ENCODE measurements at regions of chr17 and their contacts with region 1.

Region 1: GRCh38 chr17:47949136-47949759 is 7.9 kb downstream of the PNPO start:
- DNase-seq: no peak
- H3K4me3 ChIP-seq: peak overlapping the region; percentile 12; the same call in 1 of the 2 replicates
- H3K27me3 ChIP-seq: no peaks in the 10 kb centered on the region
- CTCF ChIP-seq: peak; percentile 95

Region 2: DNA sequence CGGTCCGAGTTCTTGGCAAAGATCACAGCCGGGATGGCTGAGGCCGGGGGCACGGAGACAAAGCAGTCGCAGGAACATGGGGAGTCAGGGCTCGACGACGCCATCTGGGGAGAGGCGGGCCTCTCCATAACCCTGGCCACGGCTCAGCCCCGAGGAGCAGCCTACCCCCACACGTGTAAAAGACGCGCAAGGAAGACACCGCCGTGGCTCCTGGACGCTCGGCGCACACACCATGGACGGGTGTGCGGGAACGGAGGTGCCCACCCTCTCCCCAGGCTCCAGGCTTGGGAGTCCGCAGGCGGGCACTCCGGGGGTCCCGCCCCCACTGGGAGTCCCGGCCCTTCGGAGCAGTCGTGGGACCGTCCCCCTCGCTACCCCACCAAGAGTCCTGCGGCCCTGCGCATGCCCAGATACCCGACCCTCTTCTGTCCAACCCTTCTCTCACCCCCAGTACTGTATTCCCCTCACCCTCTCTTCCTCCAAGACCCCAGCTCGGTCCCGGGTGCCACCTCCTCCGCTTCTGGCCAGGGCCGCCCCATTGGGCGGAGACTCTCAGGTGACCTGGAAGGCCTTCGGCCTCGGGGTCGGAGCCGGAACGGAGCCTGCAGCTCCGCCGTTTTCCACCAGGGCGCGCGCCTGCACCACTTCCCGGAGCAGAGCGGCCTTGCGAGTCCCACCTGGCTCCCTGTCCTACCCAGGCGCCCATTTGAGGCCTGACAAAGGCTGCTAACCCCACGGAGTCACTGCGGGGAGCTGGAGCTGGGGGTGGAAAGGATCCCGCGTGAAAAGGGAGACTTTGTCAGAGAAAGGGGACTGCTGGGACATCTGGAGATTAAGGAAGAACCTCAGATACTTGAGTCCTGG is 108.3 kb before region 1 on chr17 and contains the start of gene SCRN2:
- CTCF ChIA-PET with region 1: interaction called, 18 read pairs
- POLR2A ChIA-PET with region 1: no interaction called
- DNase-seq: no peak
- H3K4me3 ChIP-seq: peak within 1 kb of the TSS; percentile 63
- H3K27me3 ChIP-seq: peaks cover 2% of the 10 kb centered on the region
- CTCF ChIP-seq: peak; percentile 98
- polyA plus RNA-seq, gene SCRN2: 18.3 and 41.1 TPM in 2 replicates

Region 3: GRCh38 chr17:47889734-47890529 is 59.3 kb before region 1 on chr17:
- CTCF ChIA-PET with region 1: interaction called, 17 read pairs
- POLR2A ChIA-PET with region 1: no interaction called
- DNase-seq: no peak
- H3K4me3 ChIP-seq: no peak overlapping the region
- H3K27me3 ChIP-seq: no peaks in the 10 kb centered on the region
- CTCF ChIP-seq: peak; percentile 94

Region 4: GRCh38 chr17:47905221-47905781 is 43.9 kb before region 1 on chr17:
- CTCF ChIA-PET with region 1: interaction called, 45 read pairs
- POLR2A ChIA-PET with region 1: no interaction called
- DNase-seq: peak; percentile 60
- H3K4me3 ChIP-seq: no peak overlapping the region
- H3K27me3 ChIP-seq: no peaks in the 10 kb centered on the region
- CTCF ChIP-seq: no peak

Region 5: GRCh38 chr17:47929218-47930000 is 19.8 kb before region 1 on chr17:
- CTCF ChIA-PET with region 1: interaction called, 16 read pairs
- POLR2A ChIA-PET with region 1: no interaction called
- DNase-seq: no peak
- H3K4me3 ChIP-seq: no peak overlapping the region
- H3K27me3 ChIP-seq: no peaks in the 10 kb centered on the region
- CTCF ChIP-seq: no peak

Region 6: DNA sequence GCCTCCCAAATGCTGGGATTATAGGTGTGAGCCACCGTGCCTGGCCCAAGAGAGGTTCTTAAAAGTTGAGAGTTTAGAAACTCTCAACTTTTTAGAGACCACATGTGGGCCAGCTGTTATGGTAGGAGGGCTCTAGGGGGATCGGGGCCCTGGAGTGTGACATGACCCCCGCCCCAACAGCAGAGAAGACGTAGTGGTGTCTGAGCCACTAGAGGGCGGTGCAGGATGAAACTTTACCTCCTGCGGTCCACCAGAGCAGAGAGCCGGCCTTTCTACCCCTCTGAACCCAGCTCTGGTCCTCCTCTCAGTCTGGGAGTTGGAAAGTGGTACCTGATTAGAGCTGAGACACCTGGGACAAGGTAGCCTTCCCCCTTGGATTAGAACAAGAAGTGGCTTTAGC is 29.1 kb after region 1 on chr17:
- CTCF ChIA-PET with region 1: interaction called, 380 read pairs
- POLR2A ChIA-PET with region 1: no interaction called
- DNase-seq: no peak
- H3K4me3 ChIP-seq: no peak overlapping the region
- H3K27me3 ChIP-seq: no peaks in the 10 kb centered on the region
- CTCF ChIP-seq: peak; percentile 81

Region 7: DNA sequence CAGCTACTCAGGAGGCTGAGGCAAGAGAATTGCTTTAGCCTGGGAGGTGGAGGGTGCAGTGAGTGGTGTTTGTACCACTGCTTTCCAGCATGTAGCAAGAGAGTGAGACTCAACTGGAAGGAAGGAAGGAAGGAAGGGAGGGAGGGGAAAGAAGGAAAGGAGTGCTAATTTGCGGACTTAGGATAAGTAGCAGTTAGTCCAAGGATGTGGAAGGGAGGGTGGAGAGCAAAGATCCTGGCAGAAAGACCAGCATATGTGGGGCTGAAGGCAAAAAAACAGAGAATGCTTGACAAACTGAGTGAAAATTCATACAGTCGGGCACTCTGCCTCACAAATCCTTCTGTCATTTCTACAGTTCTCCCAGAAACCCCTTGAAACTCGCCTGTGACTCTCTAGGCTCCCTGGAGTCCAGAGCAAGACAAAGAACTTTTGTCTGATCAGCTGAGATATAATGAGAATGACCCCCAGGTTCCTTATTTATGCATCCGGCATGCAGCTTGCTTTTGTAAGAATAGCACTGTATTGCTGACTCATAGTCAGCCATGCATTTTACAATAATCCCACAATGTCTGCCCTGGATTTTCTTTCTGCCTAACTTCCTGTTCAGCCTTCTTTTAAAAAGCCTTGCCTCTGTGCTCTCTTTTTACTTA is 53.1 kb after region 1 on chr17:
- CTCF ChIA-PET with region 1: interaction called, 12 read pairs
- POLR2A ChIA-PET with region 1: no interaction called
- DNase-seq: peak; percentile 28
- H3K4me3 ChIP-seq: no peak overlapping the region
- H3K27me3 ChIP-seq: no peaks in the 10 kb centered on the region
- CTCF ChIP-seq: no peak